ENCODE measurements at regions of chr20 and their contacts with region 1.

Region 1: DNA sequence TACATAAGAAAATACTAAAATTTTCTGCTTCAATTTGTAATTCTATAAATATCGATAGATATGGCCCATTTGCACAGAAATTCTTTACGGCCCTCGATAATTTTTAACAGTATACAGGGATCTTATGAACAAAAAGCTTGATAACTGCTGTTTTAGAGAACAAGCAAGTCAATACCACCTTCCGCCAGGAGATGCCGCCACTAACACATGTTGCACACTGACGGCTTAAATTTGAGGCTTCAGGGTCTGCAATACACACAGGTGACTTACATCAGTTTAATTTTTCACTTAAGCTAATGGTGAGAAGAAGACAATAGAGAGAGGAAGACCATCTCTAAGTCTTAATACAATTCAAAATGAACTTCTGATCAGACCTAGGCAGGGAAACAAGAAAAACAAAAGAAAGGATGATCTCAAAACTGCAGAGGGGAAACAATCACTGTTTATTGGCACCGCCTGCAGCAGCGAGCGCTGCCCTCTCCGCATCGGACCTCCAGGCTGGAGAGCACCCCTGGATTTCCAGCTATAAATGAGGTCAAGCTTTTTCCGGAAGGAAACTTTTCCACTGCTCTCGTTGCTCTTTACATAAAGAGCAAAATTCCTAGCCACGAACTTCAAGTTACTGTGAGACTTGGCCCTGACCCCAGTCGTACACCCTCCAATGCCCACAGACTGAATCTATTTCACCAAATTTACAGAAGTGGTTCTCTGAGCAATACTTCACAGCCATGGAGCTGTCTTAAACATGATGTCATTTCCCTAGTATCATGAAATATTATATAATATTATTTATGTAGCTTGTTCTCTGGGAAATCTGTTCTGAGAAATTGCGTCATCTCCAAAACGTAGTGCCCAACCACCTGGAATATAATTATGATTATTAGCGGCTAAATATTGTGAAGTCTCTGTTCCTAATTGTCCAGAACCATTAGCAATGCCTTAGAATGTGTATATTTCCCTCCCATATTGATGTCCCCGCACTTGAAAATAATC is 54.1 kb downstream of the OTOR start:
- DNase-seq: peak; percentile 61
- H3K4me3 Mint-ChIP-seq: no peak overlapping the region
- H3K27ac Mint-ChIP-seq: no peak overlapping the region
- H3K4me1 Mint-ChIP-seq: no peaks in the 10 kb centered on the region
- H3K27me3 Mint-ChIP-seq: peaks cover 88% of the 10 kb centered on the region
- CTCF ChIP-seq: peak; percentile 86

Region 2: DNA sequence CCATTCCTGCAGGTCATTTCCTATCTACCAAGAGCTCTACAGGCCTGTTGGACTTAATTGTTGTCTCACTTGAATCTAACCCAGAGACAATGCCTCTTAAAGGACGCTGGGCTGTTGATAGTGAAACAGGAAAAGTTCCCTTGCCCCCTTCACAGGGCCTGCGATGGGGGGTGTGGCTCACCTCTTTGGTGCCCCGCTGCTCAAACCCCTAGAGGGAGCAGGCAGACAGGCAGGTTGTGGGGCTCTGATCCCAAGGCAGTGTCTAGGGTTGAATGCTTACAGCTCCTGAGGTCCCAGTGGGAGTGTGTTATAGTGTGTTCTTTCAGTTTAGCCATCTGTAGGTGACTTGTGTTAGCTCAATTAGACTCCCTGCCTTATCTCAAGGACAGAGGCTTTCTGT is 14.0 kb after region 1 on chr20:
- CTCF ChIA-PET with region 1: interaction called, 116 read pairs
- POLR2A ChIA-PET with region 1: no interaction called
- intact Hi-C with region 1: loop called (anchors 1 kb)
- DNase-seq: no peak
- H3K4me3 Mint-ChIP-seq: no peak overlapping the region
- H3K27ac Mint-ChIP-seq: no peak overlapping the region
- H3K4me1 Mint-ChIP-seq: no peaks in the 10 kb centered on the region
- H3K27me3 Mint-ChIP-seq: peaks cover 56% of the 10 kb centered on the region
- CTCF ChIP-seq: no peak

Region 3: GRCh38 chr20:17281478-17281877 is 479.3 kb after region 1 on chr20:
- CTCF ChIA-PET with region 1: interaction called, 8 read pairs
- POLR2A ChIA-PET with region 1: no interaction called
- intact Hi-C with region 1: loop called (anchors 1 kb)
- DNase-seq: peak; percentile 61
- H3K4me3 Mint-ChIP-seq: no peak overlapping the region
- H3K27ac Mint-ChIP-seq: no peak overlapping the region
- H3K4me1 Mint-ChIP-seq: no peaks in the 10 kb centered on the region
- H3K27me3 Mint-ChIP-seq: peaks cover 42% of the 10 kb centered on the region
- CTCF ChIP-seq: peak; percentile 23

Region 4: DNA sequence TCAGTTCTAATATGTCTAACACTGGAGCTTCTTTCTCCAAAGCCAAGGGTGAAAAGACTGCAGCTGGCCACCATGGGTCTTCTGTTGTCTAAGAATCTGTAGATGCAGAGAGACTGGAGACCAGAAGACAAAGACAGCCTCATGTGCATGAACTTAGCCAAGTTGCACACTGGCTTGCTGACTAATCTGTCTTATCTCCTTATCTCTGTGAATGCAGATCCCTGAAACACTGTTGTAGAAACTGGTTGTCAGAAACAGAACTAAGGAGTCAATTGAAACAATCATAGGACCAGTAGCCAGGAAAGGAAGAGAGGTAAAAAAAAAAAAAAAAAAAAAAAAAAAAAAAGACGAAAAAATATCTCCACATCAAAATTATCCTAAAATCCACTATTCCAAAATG is 619.3 kb after region 1 on chr20:
- CTCF ChIA-PET with region 1: interaction called, 577 read pairs
- POLR2A ChIA-PET with region 1: no interaction called
- intact Hi-C with region 1: no loop called
- DNase-seq: no peak
- H3K4me3 Mint-ChIP-seq: no peak overlapping the region
- H3K27ac Mint-ChIP-seq: no peak overlapping the region
- H3K4me1 Mint-ChIP-seq: no peaks in the 10 kb centered on the region
- H3K27me3 Mint-ChIP-seq: peaks cover 65% of the 10 kb centered on the region
- CTCF ChIP-seq: no peak

Region 5: GRCh38 chr20:17456279-17456678 is 654.1 kb after region 1 on chr20:
- CTCF ChIA-PET with region 1: interaction called, 15 read pairs
- POLR2A ChIA-PET with region 1: no interaction called
- intact Hi-C with region 1: no loop called
- DNase-seq: no peak
- H3K4me3 Mint-ChIP-seq: no peak overlapping the region
- H3K27ac Mint-ChIP-seq: no peak overlapping the region
- H3K4me1 Mint-ChIP-seq: no peaks in the 10 kb centered on the region
- H3K27me3 Mint-ChIP-seq: peaks cover 39% of the 10 kb centered on the region
- CTCF ChIP-seq: no peak